CD8-positive, alpha-beta T cell (primary cell): ENCODE measurements at regions of chr13 and their contacts with region 1.

Region 1: DNA sequence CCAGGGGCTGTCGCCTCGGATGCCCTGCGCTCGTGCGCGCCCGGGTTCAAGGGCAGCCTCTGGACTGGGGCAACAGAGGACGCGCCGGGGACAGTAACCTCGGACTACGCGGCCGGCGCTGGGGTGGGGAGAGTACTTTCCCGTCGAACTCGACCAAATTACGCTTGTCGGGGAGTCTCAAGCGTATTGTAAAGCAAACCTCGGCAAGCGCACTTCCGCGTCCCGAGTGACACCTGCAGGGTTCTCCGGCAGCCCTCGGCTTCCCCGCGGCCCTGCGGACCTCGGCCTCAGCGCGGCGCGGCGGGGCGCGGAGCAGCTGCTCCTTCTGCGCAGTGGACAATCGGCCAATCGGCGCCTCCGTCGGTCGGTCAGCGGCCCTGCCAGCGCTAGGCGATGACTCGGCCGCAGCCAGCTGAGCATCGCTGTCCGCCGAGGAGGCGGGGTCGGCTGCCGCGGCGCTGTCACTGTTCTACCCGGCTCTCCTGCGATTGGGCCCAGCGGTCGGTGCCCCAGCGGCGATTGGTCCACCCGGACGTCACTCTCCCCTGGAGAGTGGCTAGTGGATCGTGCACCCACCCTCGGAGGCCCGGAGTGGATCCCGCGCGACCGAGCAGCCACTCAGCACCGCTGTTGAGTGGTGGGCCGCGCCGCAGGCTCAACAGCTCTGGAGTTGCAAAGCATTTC is at the start of gene SLC46A3:
- DNase-seq: peak; percentile 94 to 99 (median 97)
- ATAC-seq: peak; percentile 98
- H3K4me3 ChIP-seq: peak within 1 kb of the TSS; percentile 94 to 97
- H3K4me3 Mint-ChIP-seq: peak within 1 kb of the TSS; percentile 93
- H3K27ac ChIP-seq: peak within 1 kb of the TSS; percentile 88 to 91
- H3K27ac Mint-ChIP-seq: peak within 1 kb of the TSS; percentile 97
- H3K4me1 ChIP-seq: peaks cover 22% of the 10 kb centered on the region
- H3K4me1 Mint-ChIP-seq: peaks cover 40% of the 10 kb centered on the region
- H3K27me3 ChIP-seq: no peaks in the 10 kb centered on the region
- H3K27me3 Mint-ChIP-seq: no peaks in the 10 kb centered on the region
- CTCF ChIP-seq: no peak
- total RNA-seq, gene SLC46A3: 5.9 TPM

Region 2: GRCh38 chr13:27432611-27433210 is 1286.0 kb before region 1 on chr13:
- CTCF ChIA-PET with region 1: no interaction called
- POLR2A ChIA-PET with region 1: no interaction called
- intact Hi-C with region 1: loop called in 1 of 2 experiments (anchors 10 kb)
- DNase-seq: peak in 4 of 9 experiments; percentile 53 to 72 (median 60)
- ATAC-seq: peak; percentile 80
- H3K4me3 ChIP-seq: no peak overlapping the region
- H3K4me3 Mint-ChIP-seq: peak overlapping the region; percentile 33
- H3K27ac ChIP-seq: peak overlapping the region; percentile 27 to 57
- H3K27ac Mint-ChIP-seq: peak overlapping the region; percentile 90
- H3K4me1 ChIP-seq: peaks cover 41% of the 10 kb centered on the region
- H3K4me1 Mint-ChIP-seq: peaks cover 54% of the 10 kb centered on the region
- H3K27me3 ChIP-seq: no peaks in the 10 kb centered on the region
- H3K27me3 Mint-ChIP-seq: no peaks in the 10 kb centered on the region
- CTCF ChIP-seq: no peak

Region 3: DNA sequence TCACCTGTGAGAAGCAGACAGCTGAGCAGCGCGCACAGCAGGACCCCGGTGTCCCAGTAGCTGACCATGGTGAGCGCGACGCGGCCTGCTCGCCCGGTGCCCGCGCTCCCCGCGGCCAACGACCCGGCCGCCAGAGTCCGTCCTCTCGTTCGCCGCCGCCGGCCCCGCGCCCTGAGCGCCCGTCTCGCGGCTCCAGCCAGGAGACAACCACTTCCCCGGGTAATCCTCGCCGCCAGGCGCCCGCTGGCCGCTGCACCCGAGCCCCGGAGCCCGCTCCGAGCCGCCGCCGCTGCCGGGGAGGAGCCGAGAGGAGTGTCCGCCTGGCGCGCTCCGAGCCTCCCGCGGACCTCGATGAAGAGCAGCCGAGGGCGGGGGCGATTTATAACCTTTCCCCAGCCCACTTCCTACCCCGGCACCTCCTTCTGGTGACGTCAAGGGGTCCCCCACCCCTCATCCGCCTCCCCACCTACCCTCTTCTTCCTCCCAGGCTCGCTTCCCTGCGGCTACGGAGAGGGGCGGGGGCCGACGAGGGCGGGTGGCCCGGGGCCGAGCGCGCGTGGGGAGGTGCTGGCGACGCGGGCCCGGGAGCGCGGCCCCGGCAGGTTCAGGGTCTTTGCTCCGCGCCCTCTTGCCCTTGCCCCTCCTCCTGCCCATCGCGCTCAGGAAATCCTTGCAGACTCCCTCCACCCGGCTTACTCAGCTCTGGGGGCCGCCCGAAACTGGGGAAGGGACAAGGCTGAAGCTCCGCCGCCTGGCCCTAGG is 223.7 kb before region 1 on chr13 and contains the start of gene FLT1:
- CTCF ChIA-PET with region 1: no interaction called
- POLR2A ChIA-PET with region 1: no interaction called
- intact Hi-C with region 1: loop called in 1 of 2 experiments (anchors 10 kb)
- DNase-seq: peak in 5 of 9 experiments; percentile 27 to 62 (median 54)
- ATAC-seq: peak; percentile 21
- H3K4me3 ChIP-seq: peak within 1 kb of the TSS; percentile 45 to 46
- H3K4me3 Mint-ChIP-seq: peak within 1 kb of the TSS; percentile 62
- H3K27ac ChIP-seq: no peak within 1 kb of the TSS
- H3K27ac Mint-ChIP-seq: peak within 1 kb of the TSS; percentile 8
- H3K4me1 ChIP-seq: peaks cover 26% of the 10 kb centered on the region
- H3K4me1 Mint-ChIP-seq: peaks cover 38% of the 10 kb centered on the region
- H3K27me3 ChIP-seq: peaks cover 5 to 6% of the 10 kb centered on the region in 2 experiments
- H3K27me3 Mint-ChIP-seq: peaks cover 22% of the 10 kb centered on the region
- CTCF ChIP-seq: no peak
- total RNA-seq, gene FLT1: 1.4 to 1.5 TPM

Region 4: DNA sequence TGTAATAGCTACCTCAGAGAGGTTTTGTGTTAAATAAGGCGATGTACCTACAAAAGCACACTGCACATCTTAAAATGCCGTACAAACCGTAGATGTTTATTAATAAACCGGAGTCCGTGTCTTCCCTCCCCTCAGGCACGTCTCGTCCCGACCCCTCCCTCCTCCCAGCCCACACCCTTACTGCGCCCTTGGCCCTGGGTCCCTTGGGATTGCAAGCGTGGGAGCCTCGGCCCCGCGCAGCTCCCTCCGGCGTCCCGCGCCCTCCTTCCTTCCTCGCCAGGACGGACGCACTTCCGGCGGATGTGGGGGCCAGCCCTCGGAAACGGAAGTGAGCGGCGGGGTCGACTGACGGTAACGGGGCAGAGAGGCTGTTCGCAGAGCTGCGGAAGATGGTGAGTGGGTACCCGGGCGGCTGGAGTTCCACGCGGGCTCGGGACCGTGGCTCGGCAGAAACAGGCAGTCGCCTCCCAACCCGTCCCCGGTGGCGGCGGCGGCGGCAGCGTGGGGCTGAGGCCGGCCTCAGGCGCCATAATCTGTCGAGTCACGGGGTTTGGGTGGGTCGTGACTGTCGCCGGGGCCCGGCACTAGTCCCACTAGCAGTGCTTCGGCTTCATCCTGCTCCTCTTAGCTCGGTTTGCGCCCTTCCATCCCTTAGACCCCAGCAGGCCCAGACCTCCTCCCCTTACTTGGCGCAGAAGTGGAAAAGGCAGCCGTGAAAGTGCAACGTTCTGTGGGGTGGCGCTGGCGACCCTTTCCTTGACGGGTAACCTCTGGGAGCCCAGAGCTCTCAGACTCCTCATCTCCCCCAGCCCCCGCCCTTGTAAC is 59.7 kb before region 1 on chr13 and contains the start of gene POMP:
- CTCF ChIA-PET with region 1: no interaction called
- POLR2A ChIA-PET with region 1: interaction called, 18 read pairs
- intact Hi-C with region 1: loop called (anchors 1 kb)
- DNase-seq: peak; percentile 79 to 95 (median 93)
- ATAC-seq: peak; percentile 77
- H3K4me3 ChIP-seq: peak within 1 kb of the TSS; percentile 72 to 73
- H3K4me3 Mint-ChIP-seq: peak within 1 kb of the TSS; percentile 98
- H3K27ac ChIP-seq: peak within 1 kb of the TSS; percentile 85 to 97
- H3K27ac Mint-ChIP-seq: peak within 1 kb of the TSS; percentile 99
- H3K4me1 ChIP-seq: peaks cover 33% of the 10 kb centered on the region
- H3K4me1 Mint-ChIP-seq: peaks cover 62% of the 10 kb centered on the region
- H3K27me3 ChIP-seq: no peaks in the 10 kb centered on the region
- H3K27me3 Mint-ChIP-seq: no peaks in the 10 kb centered on the region
- CTCF ChIP-seq: no peak
- total RNA-seq, gene POMP: 34.7 to 38.0 TPM

Region 5: DNA sequence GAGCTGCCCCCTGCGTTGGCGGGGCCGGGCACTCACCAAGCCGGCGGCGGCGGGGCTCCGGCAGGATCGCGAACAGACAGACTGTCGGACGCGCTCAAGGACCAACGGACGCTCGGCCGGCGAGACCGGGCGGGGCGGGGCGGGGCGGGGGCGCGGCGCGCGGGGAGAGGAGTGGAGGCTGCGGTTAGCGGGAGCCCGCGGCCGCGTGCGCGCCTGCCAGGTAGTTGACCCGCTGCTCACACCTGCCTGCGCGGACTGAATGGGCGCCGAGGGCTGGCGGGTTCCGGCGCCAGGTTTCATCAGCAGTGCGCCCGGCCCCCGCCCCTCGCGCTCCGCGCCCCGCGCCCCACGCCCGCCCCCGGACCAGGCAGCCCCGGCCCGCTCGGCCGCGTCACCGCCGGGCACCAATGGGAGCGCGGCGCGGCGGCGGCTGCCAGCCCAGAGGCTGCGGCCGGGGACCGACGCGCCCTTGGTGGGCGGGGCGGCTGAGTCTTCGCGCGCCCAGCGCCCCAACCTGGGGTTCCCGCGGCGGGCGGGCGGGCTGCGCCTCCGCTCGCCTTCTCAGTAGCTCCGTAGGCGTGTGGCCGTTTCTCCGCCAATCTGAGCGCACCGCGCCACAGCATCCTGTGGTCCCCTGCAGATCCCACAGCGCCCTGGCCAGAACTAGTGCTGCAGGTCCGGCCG is 876.8 kb after region 1 on chr13 and contains the start of gene SLC7A1:
- CTCF ChIA-PET with region 1: no interaction called
- POLR2A ChIA-PET with region 1: no interaction called
- intact Hi-C with region 1: loop called in 1 of 2 experiments (anchors 5 kb)
- DNase-seq: peak; percentile 67 to 93 (median 79)
- ATAC-seq: peak; percentile 88
- H3K4me3 ChIP-seq: peak within 1 kb of the TSS; percentile 61 to 74
- H3K4me3 Mint-ChIP-seq: peak within 1 kb of the TSS; percentile 90
- H3K27ac ChIP-seq: peak within 1 kb of the TSS; percentile 63 to 73
- H3K27ac Mint-ChIP-seq: peak within 1 kb of the TSS; percentile 85
- H3K4me1 ChIP-seq: peaks cover 15% of the 10 kb centered on the region
- H3K4me1 Mint-ChIP-seq: peaks cover 36% of the 10 kb centered on the region
- H3K27me3 ChIP-seq: no peaks in the 10 kb centered on the region
- H3K27me3 Mint-ChIP-seq: no peaks in the 10 kb centered on the region
- CTCF ChIP-seq: no peak
- total RNA-seq, gene SLC7A1: 15.2 to 18.4 TPM